Activated CD4-positive, alpha-beta memory T cell treated with anti-CD3 and anti-CD28 coated beads for 36 hours (primary cell): ENCODE measurements at regions of chr21 and their contacts with region 1.

Region 1: GRCh38 chr21:43866260-43866629 is 1.2 kb downstream of the AGPAT3 start:
- DNase-seq: peak; percentile 80
- H3K4me3 Mint-ChIP-seq: peak overlapping the region; percentile 80
- H3K27ac Mint-ChIP-seq: peak overlapping the region; percentile 90
- H3K4me1 Mint-ChIP-seq: peaks cover 43% of the 10 kb centered on the region
- H3K27me3 Mint-ChIP-seq: no peaks in the 10 kb centered on the region

Region 2: DNA sequence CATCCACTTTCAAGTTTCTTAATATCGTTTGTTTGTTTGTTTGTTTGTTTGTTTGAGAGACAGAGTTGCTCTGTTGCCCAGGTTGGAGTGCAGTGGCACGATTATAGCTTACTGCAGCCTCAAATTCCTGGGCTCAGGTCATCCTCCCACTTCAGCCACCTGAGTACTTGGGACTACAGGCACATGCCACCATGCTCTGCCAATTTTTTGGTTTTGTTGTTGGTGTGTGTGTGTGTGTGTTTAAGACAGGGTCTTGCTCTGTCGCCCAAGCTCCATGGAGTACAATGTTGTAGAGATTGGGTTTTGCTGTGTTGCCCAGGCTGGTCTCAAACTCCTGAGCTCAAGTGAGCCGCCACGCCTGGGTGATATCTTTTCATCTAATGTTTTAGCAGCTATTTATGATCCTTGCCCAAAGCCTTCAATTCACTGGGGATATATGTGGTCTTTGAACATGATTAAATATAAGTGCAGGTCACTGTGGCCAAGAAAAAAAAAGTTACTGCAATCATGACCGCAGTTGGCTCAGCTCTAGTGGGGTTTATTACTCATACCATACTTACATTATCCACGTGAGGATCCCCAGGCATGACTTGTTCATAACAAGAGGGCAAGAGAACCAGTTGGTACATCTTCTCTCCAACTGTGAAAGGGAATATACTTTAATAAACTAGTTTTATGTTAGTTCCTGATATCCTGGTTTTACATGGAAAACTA is 198.9 kb before region 1 on chr21:
- CTCF ChIA-PET with region 1: no interaction called
- POLR2A ChIA-PET with region 1: no interaction called
- intact Hi-C with region 1: loop called (anchors 5 kb)
- DNase-seq: peak; percentile 40
- H3K4me3 Mint-ChIP-seq: no peak overlapping the region
- H3K27ac Mint-ChIP-seq: peak overlapping the region; percentile 67
- H3K4me1 Mint-ChIP-seq: peaks cover 46% of the 10 kb centered on the region
- H3K27me3 Mint-ChIP-seq: no peaks in the 10 kb centered on the region

Region 3: GRCh38 chr21:43703035-43703880 is 163.0 kb before region 1 on chr21:
- CTCF ChIA-PET with region 1: no interaction called
- POLR2A ChIA-PET with region 1: no interaction called
- intact Hi-C with region 1: no loop called
- DNase-seq: peak; percentile 34
- H3K4me3 Mint-ChIP-seq: no peak overlapping the region
- H3K27ac Mint-ChIP-seq: no peak overlapping the region
- H3K4me1 Mint-ChIP-seq: peaks cover 7% of the 10 kb centered on the region
- H3K27me3 Mint-ChIP-seq: peaks cover 1% of the 10 kb centered on the region

Region 4: DNA sequence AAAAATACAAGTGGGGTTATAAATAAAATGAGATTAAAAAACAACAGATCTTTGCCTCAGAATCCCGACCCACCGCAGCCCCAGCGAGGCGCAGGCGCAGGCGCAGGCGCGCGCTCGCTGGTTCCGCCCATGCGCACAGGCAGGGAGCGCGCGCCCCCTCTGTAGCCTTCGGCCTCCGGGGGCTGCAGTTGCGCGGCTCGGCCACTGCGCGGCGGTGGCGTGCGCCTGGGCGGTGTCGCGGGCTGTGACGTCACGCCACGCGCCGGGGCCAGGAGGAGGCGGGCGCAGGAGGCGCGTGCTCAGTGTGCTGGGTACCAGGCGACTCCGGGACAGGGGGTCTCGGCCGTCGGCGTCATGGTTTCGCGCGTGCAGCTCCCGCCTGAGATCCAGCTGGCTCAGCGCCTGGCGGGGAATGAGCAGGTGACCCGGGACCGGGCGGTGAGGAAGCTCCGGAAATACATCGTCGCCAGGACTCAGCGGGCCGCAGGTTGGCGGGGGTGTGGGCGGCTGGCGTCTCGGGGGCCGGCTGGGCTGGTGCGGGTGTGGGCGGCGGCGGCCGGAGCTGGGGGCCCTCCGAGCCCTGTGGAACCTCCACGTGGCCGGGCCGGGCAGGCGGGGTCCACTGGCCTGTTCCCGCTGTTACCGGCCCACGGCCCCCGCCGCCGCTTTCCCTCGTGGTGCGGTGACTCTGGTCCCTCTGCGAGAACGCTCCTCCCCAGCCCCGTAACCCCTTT is 76.8 kb before region 1 on chr21 and contains the start of gene RRP1:
- CTCF ChIA-PET with region 1: no interaction called
- POLR2A ChIA-PET with region 1: no interaction called
- intact Hi-C with region 1: loop called (anchors 1 kb)
- DNase-seq: peak; percentile 94
- H3K4me3 Mint-ChIP-seq: peak within 1 kb of the TSS; percentile 97
- H3K27ac Mint-ChIP-seq: peak within 1 kb of the TSS; percentile 84
- H3K4me1 Mint-ChIP-seq: peaks cover 24% of the 10 kb centered on the region
- H3K27me3 Mint-ChIP-seq: no peaks in the 10 kb centered on the region
- total RNA-seq, gene RRP1: 42.7 to 47.8 TPM

Region 5: DNA sequence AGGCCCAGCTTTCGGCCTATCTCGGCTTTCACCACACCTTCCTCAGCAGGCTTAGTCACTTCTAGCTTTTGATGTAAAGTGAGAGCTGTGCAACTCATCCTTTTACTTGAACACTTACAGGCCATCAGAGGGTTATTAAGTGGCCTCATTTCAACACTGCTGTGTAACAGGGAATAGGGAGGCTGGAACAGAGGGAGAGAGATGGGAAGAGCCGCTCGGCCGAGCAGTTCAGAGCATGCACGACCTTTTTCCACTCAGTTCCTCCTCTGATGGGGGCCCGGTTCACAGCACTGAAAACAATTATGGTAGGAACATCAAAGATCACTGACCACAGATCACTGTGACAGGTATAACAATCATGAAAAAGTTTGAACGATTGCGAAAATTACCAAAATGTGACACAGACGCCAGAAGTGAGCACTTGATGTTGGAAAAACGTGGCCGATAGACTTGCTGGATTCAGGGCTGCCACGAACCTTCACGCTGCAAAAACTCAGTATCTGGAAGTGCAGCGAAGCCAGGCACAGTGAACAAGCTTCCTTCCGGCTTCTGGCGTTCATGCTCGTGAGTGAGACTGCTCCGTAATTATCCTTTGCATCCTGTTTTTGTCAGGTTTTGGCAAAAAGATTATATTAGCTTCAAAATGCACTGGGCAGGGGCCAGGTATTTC is 27.4 kb after region 1 on chr21:
- CTCF ChIA-PET with region 1: no interaction called
- POLR2A ChIA-PET with region 1: interaction called, 3 read pairs
- intact Hi-C with region 1: loop called (anchors 1 kb)
- DNase-seq: peak; percentile 73
- H3K4me3 Mint-ChIP-seq: peak overlapping the region; percentile 42
- H3K27ac Mint-ChIP-seq: peak overlapping the region; percentile 71
- H3K4me1 Mint-ChIP-seq: peaks cover 50% of the 10 kb centered on the region
- H3K27me3 Mint-ChIP-seq: no peaks in the 10 kb centered on the region

Region 6: DNA sequence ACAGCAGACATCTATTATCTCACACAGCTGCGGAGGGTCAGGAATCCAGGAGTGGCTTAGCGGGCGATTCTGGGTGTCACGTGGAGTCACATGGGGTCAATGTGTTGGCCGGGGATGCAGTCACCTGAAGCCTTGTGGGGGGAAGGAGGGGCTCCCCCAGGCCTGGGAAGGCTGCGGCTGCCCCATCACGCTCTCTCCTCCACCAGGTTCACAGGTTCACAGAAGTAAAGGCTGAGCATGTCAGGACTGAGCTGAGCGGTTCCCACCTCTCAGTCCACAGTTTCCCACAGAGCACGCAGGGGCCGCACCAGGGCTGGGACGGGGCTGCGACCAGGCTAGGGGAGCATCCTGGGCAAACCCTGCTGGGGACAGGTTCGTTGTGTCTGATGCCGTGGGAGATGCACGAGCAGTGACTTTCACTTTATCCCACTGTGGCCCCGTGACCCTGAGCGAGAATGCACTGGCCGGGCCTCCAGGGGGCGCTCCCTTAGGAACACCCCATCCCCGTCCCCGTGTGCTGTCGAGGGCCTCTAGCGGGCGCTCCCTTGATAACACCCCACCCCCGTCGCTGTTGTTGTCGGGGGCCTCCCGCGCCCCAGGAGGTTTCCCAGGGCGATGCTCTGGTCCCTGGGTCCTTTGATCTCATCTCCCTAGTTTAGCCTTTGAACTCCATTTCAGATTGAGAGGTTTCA is 72.7 kb after region 1 on chr21:
- CTCF ChIA-PET with region 1: interaction called, 5 read pairs
- POLR2A ChIA-PET with region 1: no interaction called
- intact Hi-C with region 1: loop called (anchors 1 kb)
- DNase-seq: peak; percentile 93
- H3K4me3 Mint-ChIP-seq: peak overlapping the region; percentile 81
- H3K27ac Mint-ChIP-seq: peak overlapping the region; percentile 31
- H3K4me1 Mint-ChIP-seq: peaks cover 19% of the 10 kb centered on the region
- H3K27me3 Mint-ChIP-seq: no peaks in the 10 kb centered on the region

Region 7: GRCh38 chr21:44353191-44353970 is 487.1 kb after region 1 on chr21 and contains the start of gene TRPM2:
- CTCF ChIA-PET with region 1: no interaction called
- POLR2A ChIA-PET with region 1: no interaction called
- intact Hi-C with region 1: no loop called
- DNase-seq: peak; percentile 40
- H3K4me3 Mint-ChIP-seq: peak within 1 kb of the TSS; percentile 39
- H3K27ac Mint-ChIP-seq: peak within 1 kb of the TSS; percentile 58
- H3K4me1 Mint-ChIP-seq: peaks cover 38% of the 10 kb centered on the region
- H3K27me3 Mint-ChIP-seq: peaks cover 10% of the 10 kb centered on the region
- total RNA-seq, gene TRPM2: 1.6 to 1.9 TPM

Region 8: GRCh38 chr21:45747802-45748445 is 1881.7 kb after region 1 on chr21:
- CTCF ChIA-PET with region 1: no interaction called
- POLR2A ChIA-PET with region 1: no interaction called
- intact Hi-C with region 1: no loop called
- DNase-seq: no peak
- H3K4me3 Mint-ChIP-seq: no peak overlapping the region
- H3K27ac Mint-ChIP-seq: no peak overlapping the region
- H3K4me1 Mint-ChIP-seq: no peaks in the 10 kb centered on the region
- H3K27me3 Mint-ChIP-seq: no peaks in the 10 kb centered on the region